ENCODE measurements at regions of chr13 and their contacts with region 1.

Region 1: GRCh38 chr13:71358218-71358617 is 508.8 kb downstream of the DACH1 start:
- DNase-seq: no peak
- ATAC-seq: no peak
- H3K4me3 ChIP-seq: no peak overlapping the region
- H3K27ac ChIP-seq: no peak overlapping the region
- H3K4me1 ChIP-seq: no peaks in the 10 kb centered on the region
- H3K27me3 ChIP-seq: no peaks in the 10 kb centered on the region
- CTCF ChIP-seq: no peak
- EP300 ChIP-seq: no peak
- POLR2A ChIP-seq: no peak
- RAD21 ChIP-seq: no peak

Region 2: GRCh38 chr13:70908795-70909194 is 449.4 kb before region 1 on chr13:
- CTCF ChIA-PET with region 1: no interaction called
- POLR2A ChIA-PET with region 1: no interaction called
- in situ Hi-C with region 1: no loop called
- intact Hi-C with region 1: no loop called
- DNase-seq: no peak
- ATAC-seq: no peak
- H3K4me3 ChIP-seq: no peak overlapping the region
- H3K27ac ChIP-seq: no peak overlapping the region
- H3K4me1 ChIP-seq: no peaks in the 10 kb centered on the region
- H3K27me3 ChIP-seq: no peaks in the 10 kb centered on the region
- CTCF ChIP-seq: no peak
- EP300 ChIP-seq: no peak
- POLR2A ChIP-seq: no peak
- RAD21 ChIP-seq: no peak

Region 3: GRCh38 chr13:71374471-71375049 is 16.3 kb after region 1 on chr13:
- CTCF ChIA-PET with region 1: no interaction called
- POLR2A ChIA-PET with region 1: no interaction called
- in situ Hi-C with region 1: no loop called
- intact Hi-C with region 1: loop called (anchors 1 kb)
- DNase-seq: no peak
- ATAC-seq: no peak
- H3K4me3 ChIP-seq: no peak overlapping the region
- H3K27ac ChIP-seq: no peak overlapping the region
- H3K4me1 ChIP-seq: no peaks in the 10 kb centered on the region
- H3K27me3 ChIP-seq: no peaks in the 10 kb centered on the region
- CTCF ChIP-seq: no peak
- EP300 ChIP-seq: no peak
- POLR2A ChIP-seq: no peak
- RAD21 ChIP-seq: no peak

Measured in HepG2 (cell line).